OCI-LY7 (cell line): ENCODE measurements at regions of chr6 and their contacts with region 1.

Region 1: GRCh38 chr6:107740496-107741190 is 83.5 kb downstream of the SCML4 start:
- DNase-seq: peak; percentile 48
- H3K4me3 ChIP-seq: peak overlapping the region; percentile 54
- H3K27ac ChIP-seq: no peak overlapping the region
- H3K4me1 ChIP-seq: peaks cover 45% of the 10 kb centered on the region
- CTCF ChIP-seq: no peak

Region 2: DNA sequence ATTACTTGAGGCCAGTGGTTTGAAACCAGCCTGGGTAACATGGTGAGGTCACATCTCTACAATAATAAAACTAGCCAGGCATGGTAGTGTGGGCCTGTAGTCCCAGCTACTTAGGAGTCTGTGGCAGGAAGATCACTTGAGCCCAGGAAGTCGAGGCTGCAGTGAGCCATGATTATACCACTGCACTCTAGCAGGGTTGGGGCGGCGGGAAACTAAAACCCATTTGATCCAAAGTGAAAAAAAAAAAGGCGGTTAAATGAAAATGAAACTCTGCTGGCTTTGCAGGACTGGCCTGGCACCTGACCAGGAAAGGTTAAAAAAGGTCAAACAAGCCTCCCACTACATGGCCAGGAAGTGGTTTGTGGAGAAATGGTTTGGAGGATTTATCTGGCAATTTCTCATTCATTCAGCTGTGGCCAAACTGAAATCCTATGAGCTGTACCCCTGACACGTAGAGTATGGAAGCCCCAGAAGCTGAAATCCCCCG is 676.0 kb before region 1 on chr6:
- CTCF ChIA-PET with region 1: no interaction called
- POLR2A ChIA-PET with region 1: no interaction called
- intact Hi-C with region 1: no loop called
- DNase-seq: no peak
- H3K4me3 ChIP-seq: no peak overlapping the region
- H3K27ac ChIP-seq: no peak overlapping the region
- H3K4me1 ChIP-seq: peaks cover 20% of the 10 kb centered on the region
- CTCF ChIP-seq: no peak

Region 3: GRCh38 chr6:107729100-107729499 is 11.5 kb before region 1 on chr6:
- CTCF ChIA-PET with region 1: no interaction called
- POLR2A ChIA-PET with region 1: interaction called, 10 read pairs
- intact Hi-C with region 1: no loop called
- DNase-seq: no peak
- H3K4me3 ChIP-seq: no peak overlapping the region
- H3K27ac ChIP-seq: no peak overlapping the region
- H3K4me1 ChIP-seq: peaks cover 49% of the 10 kb centered on the region
- CTCF ChIP-seq: peak; percentile 41; the same call in 1 of the 2 replicates

Region 4: DNA sequence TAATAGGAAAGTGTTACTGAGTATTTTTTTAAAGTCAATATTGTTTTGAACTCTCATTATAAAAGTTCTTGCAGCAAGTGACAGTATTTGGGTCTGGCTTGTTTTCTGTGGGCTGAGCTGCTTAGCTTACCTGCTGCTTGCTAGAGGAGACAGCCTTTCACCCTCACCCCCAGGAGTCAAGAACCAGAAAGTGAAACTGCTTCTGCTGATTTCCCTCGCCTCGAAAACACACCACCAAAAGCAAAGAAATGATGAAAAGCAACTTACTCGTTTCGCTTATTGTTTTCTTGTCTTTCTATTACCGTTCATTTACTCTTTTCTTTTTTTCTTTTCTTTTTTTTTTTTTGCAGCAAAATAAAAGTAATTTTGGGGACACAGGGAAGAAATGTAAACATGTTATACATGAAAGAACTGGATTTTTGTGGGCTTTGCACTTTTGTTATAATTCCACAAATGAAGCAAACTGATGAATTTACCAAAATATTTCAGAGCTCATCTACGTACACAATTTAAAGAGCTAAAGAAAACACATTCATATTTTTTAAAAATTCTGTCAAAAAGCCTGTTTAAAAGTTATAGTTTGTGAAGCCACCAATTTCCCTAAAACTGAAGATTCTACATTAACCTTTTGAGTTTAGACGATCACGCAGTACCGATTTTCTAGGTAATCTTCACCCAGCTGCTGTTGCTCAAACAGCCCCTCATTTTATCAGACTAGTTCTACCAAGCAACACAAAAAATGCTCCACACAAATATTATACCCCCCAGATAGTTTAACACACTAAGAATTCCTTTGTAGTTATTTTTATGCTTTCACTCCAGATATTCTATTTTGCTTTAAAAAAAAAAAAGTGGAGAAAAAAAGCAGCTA is 81.8 kb after region 1 on chr6:
- CTCF ChIA-PET with region 1: no interaction called
- POLR2A ChIA-PET with region 1: interaction called, 3 read pairs
- intact Hi-C with region 1: loop called (anchors 2 kb)
- DNase-seq: peak; percentile 55
- H3K4me3 ChIP-seq: peak overlapping the region; percentile 60
- H3K27ac ChIP-seq: no peak overlapping the region
- H3K4me1 ChIP-seq: peaks cover 28% of the 10 kb centered on the region
- CTCF ChIP-seq: no peak